T-cell (primary cell): ENCODE measurements at regions of chr9 and their contacts with region 1.

Region 1: DNA sequence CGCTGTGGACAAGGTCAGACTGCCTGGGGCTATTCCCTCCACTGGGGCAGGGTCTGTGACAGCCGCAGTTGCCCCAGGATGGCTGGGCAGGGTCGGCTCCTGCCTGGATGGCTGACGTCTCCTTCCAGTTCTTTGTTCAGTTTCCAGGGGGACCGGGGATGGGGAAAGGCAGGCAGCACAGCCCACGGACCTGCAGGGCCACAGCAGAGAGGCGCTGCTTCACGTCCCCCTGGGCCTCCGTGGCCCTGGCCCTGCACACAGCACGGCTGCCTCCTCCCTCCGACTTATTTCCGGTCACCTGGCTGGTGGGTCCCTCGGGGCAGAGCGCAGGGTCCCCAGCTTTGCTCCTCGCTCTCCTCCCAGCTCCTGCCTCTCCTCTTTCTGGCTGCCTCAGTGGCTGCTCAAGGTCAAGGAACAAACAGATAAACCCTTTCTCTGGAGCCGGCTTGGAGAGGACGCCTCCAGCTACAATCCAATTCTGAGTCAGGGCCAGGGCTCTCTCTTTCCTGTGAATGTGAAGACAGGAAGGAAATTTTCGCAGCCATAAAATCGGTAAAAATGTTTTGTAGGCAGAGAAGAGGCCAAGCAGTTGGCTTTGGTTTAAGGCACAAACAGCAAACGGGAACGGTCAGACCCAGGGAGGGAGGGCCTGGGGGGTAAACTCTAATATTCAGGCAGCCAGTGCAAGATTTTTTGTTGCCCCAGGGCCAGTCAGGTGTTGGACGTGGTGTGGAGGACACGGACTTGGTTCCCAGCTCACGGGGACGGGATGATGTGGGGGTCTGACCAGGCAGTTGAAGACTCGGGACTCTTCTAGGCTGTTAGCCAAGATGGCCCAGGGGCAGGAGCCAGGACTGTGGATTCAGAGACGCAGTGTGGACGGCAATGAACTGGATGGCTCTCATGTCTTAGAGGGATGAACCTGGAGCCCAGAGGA is 169.5 kb downstream of the C9orf50 start:
- DNase-seq: no peak
- ATAC-seq: no peak
- H3K4me3 ChIP-seq: no peak overlapping the region
- H3K4me3 Mint-ChIP-seq: no peak overlapping the region
- H3K27ac ChIP-seq: no peak overlapping the region
- H3K27ac Mint-ChIP-seq: no peak overlapping the region
- H3K4me1 ChIP-seq: peaks cover 0 to 14% of the 10 kb centered on the region in 2 experiments
- H3K4me1 Mint-ChIP-seq: peaks cover 5 to 24% (median 15%) of the 10 kb centered on the region in 3 donors
- H3K27me3 ChIP-seq: no peaks in the 10 kb centered on the region
- H3K27me3 Mint-ChIP-seq: peaks cover 0 to 2% of the 10 kb centered on the region in 2 donors

Region 2: GRCh38 chr9:129182625-129183495 is 268.5 kb before region 1 on chr9:
- CTCF ChIA-PET with region 1: no interaction called
- POLR2A ChIA-PET with region 1: no interaction called
- DNase-seq: no peak
- ATAC-seq: no peak
- H3K4me3 ChIP-seq: no peak overlapping the region
- H3K4me3 Mint-ChIP-seq: no peak overlapping the region
- H3K27ac ChIP-seq: no peak overlapping the region
- H3K27ac Mint-ChIP-seq: no peak overlapping the region
- H3K4me1 ChIP-seq: peaks cover 0 to 17% of the 10 kb centered on the region in 2 experiments
- H3K4me1 Mint-ChIP-seq: peaks cover 0 to 9% (median 2%) of the 10 kb centered on the region in 3 donors
- H3K27me3 ChIP-seq: peaks cover 0 to 32% of the 10 kb centered on the region in 2 experiments
- H3K27me3 Mint-ChIP-seq: no peaks in the 10 kb centered on the region

Region 3: GRCh38 chr9:129497005-129497839 is 45.9 kb after region 1 on chr9:
- CTCF ChIA-PET with region 1: no interaction called
- POLR2A ChIA-PET with region 1: interaction called in 1 of 2 experiments, 12 read pairs
- DNase-seq: no peak
- ATAC-seq: no peak
- H3K4me3 ChIP-seq: peak overlapping the region in 1 of 2 donors; percentile 64
- H3K4me3 Mint-ChIP-seq: peak overlapping the region; percentile 73 to 82 (median 74)
- H3K27ac ChIP-seq: peak overlapping the region; percentile 38
- H3K27ac Mint-ChIP-seq: peak overlapping the region; percentile 82 to 91
- H3K4me1 ChIP-seq: peaks cover 6 to 25% of the 10 kb centered on the region in 2 experiments
- H3K4me1 Mint-ChIP-seq: peaks cover 30 to 31% (median 30%) of the 10 kb centered on the region in 3 donors
- H3K27me3 ChIP-seq: peaks cover 0 to 3% of the 10 kb centered on the region in 2 experiments
- H3K27me3 Mint-ChIP-seq: no peaks in the 10 kb centered on the region

Region 4: DNA sequence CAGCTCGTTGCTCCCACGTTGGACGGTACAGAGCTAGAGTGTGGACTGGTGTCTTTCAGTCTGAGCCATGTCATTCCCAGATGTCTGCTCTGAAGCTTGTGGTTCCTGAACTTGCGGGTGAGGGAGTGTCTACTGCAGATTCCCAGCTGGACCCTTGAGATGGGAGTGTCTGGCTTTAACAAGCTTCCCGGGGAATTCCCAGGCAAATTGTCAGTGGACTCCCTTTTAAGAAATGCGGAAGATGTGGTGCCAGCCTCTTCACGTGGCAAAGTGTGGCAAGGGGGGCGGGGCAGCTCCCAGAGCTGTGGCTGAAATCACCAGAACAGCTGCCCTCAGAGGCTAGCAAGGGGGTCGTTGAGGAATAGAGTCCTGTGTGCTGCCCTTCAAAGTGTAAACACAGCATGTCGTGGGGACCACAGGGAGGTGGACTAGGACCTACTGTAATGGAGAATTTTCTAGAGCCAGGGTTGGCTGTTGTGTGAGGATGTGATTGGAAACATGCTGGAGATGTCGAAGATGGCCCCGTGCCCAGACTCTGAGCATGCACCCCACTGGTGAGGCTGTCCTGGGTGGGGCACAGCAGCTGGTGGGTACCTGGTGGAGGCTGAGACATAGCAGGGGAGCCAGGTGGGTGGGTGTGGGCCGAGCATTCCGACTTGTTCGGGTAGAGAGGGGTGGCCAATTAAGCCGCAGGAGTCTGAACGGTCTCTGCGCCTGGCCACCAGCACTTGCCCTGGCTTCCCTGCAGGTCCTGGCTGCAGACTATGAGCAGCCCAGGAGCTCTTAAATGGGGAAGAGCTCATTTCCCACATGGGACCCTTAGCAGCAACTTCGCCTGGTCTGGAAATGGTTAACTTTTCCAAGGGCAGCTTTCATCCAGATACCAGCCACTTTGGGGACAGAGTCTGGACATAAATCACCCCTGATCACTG is 251.5 kb after region 1 on chr9:
- CTCF ChIA-PET with region 1: no interaction called
- POLR2A ChIA-PET with region 1: no interaction called
- DNase-seq: no peak
- ATAC-seq: no peak
- H3K4me3 ChIP-seq: no peak overlapping the region
- H3K4me3 Mint-ChIP-seq: no peak overlapping the region
- H3K27ac ChIP-seq: no peak overlapping the region
- H3K27ac Mint-ChIP-seq: no peak overlapping the region
- H3K4me1 ChIP-seq: peaks cover 0 to 4% of the 10 kb centered on the region in 2 experiments
- H3K4me1 Mint-ChIP-seq: peaks cover 0 to 2% (median 0%) of the 10 kb centered on the region in 3 donors
- H3K27me3 ChIP-seq: peaks cover 2 to 36% of the 10 kb centered on the region in 2 experiments
- H3K27me3 Mint-ChIP-seq: peaks cover 15 to 38% of the 10 kb centered on the region in 2 donors